AG04450 (cell line): ENCODE measurements at regions of chr2 and their contacts with region 1.

Region 1: GRCh38 chr2:240143801-240144648 is 3.6 kb upstream of the OTOS start:
- DNase-seq: no peak
- H3K4me3 ChIP-seq: no peak overlapping the region
- H3K27ac ChIP-seq: no peak overlapping the region
- H3K27me3 ChIP-seq: peaks cover 22% of the 10 kb centered on the region
- CTCF ChIP-seq: peak; percentile 90

Region 2: GRCh38 chr2:239953418-239954061 is 190.5 kb before region 1 on chr2:
- CTCF ChIA-PET with region 1: no interaction called
- POLR2A ChIA-PET with region 1: no interaction called
- DNase-seq: no peak
- H3K4me3 ChIP-seq: no peak overlapping the region
- H3K27ac ChIP-seq: no peak overlapping the region
- H3K27me3 ChIP-seq: no peaks in the 10 kb centered on the region
- CTCF ChIP-seq: no peak

Region 3: DNA sequence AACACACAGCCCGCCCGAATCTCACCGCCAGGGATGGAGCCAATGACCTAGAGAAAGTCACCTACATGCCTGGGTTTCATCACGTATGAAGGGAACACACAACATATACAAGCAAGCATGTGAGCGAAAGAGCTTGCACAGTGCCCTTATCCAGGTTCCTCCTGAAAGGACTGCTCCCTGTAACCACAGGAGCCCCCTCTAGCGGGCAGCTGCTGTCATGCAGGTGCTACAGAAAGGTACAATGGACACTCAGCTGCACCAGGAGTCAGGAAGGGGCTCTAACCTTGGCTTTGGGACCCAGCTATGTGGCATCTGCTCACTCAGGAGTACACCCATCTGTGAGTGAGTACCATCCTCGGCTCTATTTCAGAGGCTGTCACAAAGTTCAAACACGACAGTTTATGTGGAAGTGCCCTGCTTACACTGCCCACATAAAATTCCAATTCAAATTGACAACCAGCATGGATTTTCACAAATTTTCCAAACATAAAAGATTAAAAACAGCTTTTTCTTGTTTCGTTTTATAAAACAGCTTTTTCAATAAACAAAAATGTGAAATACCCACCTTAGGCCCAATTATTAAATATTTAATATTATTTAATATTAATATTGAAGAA is 122.4 kb before region 1 on chr2:
- CTCF ChIA-PET with region 1: interaction called, 14 read pairs
- POLR2A ChIA-PET with region 1: no interaction called
- DNase-seq: peak; percentile 11
- H3K4me3 ChIP-seq: no peak overlapping the region
- H3K27ac ChIP-seq: no peak overlapping the region
- H3K27me3 ChIP-seq: no peaks in the 10 kb centered on the region
- CTCF ChIP-seq: peak; percentile 85

Region 4: GRCh38 chr2:240060977-240061591 is 82.9 kb before region 1 on chr2:
- CTCF ChIA-PET with region 1: interaction called, 239 read pairs
- POLR2A ChIA-PET with region 1: interaction called, 3 read pairs
- DNase-seq: peak; percentile 18
- H3K4me3 ChIP-seq: no peak overlapping the region
- H3K27ac ChIP-seq: no peak overlapping the region
- H3K27me3 ChIP-seq: peaks cover 10% of the 10 kb centered on the region
- CTCF ChIP-seq: peak; percentile 73

Region 5: DNA sequence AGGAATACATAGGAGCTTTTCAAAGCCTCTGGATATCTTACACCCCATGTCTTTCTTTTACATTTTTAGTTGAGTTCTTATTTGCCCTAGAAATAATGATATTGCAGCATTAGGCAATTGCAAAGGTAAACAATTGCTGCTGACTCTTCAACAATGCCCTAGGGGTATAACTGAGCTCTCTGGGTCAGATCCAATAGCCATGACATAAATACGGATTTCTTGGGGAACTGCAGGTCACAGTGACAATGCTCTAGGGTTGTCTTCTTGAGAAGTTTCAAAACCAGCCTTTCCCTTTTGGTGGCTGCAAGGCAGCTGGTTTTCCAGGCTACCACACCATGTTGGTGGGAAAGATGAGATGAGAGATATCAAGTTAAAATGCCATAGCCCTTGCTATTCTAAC is 74.2 kb before region 1 on chr2:
- CTCF ChIA-PET with region 1: interaction called, 239 read pairs
- POLR2A ChIA-PET with region 1: no interaction called
- DNase-seq: no peak
- H3K4me3 ChIP-seq: no peak overlapping the region
- H3K27ac ChIP-seq: no peak overlapping the region
- H3K27me3 ChIP-seq: no peaks in the 10 kb centered on the region
- CTCF ChIP-seq: no peak

Region 6: GRCh38 chr2:240162939-240163714 is 19.1 kb after region 1 on chr2:
- CTCF ChIA-PET with region 1: no interaction called
- POLR2A ChIA-PET with region 1: no interaction called
- DNase-seq: no peak
- H3K4me3 ChIP-seq: no peak overlapping the region
- H3K27ac ChIP-seq: no peak overlapping the region
- H3K27me3 ChIP-seq: no peaks in the 10 kb centered on the region
- CTCF ChIP-seq: no peak